Mucosa of descending colon (tissue), 3 donors: ENCODE measurements at regions of chr5 and their contacts with region 1.

Region 1: GRCh38 chr5:149852641-149853330 is 91.8 kb downstream of the PDE6A start:
- DNase-seq: peak in 2 of 3 donors; percentile 77 to 92
- ATAC-seq: peak; percentile 43
- H3K4me3 ChIP-seq: no peak overlapping the region
- H3K4me1 ChIP-seq: peaks cover 32% of the 10 kb centered on the region
- CTCF ChIP-seq: peak; percentile 82

Region 2: DNA sequence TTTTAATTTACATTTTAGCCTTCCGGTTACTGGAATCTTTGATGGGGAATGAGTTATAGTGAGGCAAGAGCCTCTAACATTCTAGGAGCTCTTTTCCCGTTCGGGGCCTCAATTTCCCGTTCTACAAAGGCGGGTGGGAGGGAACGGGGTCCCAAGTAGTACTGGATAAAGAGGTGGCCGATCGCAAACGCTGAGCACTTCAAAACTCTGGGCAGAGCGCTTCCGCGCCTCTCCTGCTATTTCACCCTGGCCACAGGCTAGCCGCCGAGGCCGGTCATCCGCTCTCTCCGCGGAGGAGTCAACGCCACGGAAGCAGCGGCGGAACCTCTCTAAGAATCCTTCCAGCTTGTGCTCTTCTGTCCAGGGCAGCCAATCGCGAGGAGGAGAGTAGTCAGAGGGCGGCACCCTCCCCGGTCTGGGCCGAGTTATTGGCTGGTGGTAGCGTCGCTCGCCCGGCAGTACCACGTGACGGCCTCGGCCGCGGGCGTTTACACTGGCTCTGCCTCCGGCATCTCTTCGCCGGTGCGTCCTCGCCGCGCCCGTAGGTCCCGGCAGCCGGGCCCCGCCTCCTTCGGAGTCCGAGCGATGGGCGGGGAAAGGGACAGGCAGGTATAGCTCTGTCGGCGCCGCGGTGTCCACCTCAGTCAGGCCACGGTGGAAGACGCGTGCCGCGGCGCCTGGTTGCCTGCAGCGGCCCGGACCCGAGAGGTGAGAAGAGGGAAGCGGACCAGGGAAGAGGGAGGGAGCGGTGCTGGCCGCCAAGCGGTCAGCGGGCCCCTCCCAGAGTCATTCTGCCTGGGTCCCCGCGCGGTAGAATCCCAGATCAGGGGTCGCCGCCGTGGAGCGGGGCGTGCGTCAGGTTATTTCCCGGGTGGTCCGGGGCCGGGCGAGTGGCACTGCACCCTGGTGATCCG is 107.7 kb after region 1 on chr5 and contains the start of gene SLC26A2:
- intact Hi-C with region 1: loop called in 1 of 2 experiments (anchors 5 kb)
- DNase-seq: peak; percentile 98
- ATAC-seq: peak; percentile 94
- H3K4me3 ChIP-seq: peak within 1 kb of the TSS; percentile 53
- H3K4me1 ChIP-seq: peaks cover 24% of the 10 kb centered on the region
- CTCF ChIP-seq: no peak
- total RNA-seq, gene SLC26A2: 562 to 1,399 (median 853) TPM